GM10248 (cell line): ENCODE measurements at regions of chr11 and their contacts with region 1.

Region 1: DNA sequence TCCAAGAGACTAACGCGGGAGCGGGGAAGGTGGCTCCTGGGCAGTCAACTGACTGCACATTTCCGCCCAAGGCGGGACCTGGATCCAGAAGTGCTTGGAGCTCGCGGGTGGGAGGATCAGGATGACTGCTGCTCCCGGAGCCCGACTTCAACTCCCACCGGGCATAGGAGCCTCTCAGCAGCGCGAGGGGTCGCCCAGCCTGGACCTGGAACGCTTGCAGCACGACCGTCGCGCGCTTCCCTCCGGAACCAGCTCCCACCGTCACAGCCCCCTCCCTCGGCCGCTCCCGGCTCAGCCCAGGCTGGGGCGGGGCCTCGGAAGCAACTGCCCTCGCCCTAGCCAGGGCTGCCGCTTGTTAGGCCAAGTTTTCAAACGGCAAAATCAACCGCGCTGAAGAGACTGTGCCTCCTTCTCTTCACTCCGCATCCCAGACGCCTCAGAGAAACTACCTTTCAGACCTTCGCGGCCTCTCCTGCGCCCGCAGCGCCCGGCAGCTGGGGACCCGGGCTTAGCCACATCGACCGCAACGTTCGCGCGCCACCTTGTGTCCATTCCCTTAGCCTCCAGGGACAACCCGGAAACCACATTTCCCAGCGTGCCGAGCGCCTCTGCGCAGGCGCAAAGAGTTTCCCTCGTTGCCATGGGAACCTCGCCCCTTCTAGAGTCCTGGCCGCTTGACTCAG is 14.0 kb downstream of the SSH3 start:
- DNase-seq: peak; percentile 100
- CTCF ChIP-seq: peak; percentile 91

Region 2: GRCh38 chr11:67082035-67082791 is 235.1 kb before region 1 on chr11:
- CTCF ChIA-PET with region 1: interaction called, 23 read pairs
- POLR2A ChIA-PET with region 1: no interaction called
- DNase-seq: no peak
- CTCF ChIP-seq: no peak

Region 3: GRCh38 chr11:67277231-67277961 is 40.0 kb before region 1 on chr11:
- CTCF ChIA-PET with region 1: interaction called, 21 read pairs
- POLR2A ChIA-PET with region 1: interaction called, 4 read pairs
- DNase-seq: peak; percentile 93
- CTCF ChIP-seq: no peak

Region 4: GRCh38 chr11:67301313-67301921 is 15.9 kb before region 1 on chr11:
- CTCF ChIA-PET with region 1: interaction called, 20 read pairs
- POLR2A ChIA-PET with region 1: interaction called, 3 read pairs
- DNase-seq: no peak
- CTCF ChIP-seq: no peak

Region 5: DNA sequence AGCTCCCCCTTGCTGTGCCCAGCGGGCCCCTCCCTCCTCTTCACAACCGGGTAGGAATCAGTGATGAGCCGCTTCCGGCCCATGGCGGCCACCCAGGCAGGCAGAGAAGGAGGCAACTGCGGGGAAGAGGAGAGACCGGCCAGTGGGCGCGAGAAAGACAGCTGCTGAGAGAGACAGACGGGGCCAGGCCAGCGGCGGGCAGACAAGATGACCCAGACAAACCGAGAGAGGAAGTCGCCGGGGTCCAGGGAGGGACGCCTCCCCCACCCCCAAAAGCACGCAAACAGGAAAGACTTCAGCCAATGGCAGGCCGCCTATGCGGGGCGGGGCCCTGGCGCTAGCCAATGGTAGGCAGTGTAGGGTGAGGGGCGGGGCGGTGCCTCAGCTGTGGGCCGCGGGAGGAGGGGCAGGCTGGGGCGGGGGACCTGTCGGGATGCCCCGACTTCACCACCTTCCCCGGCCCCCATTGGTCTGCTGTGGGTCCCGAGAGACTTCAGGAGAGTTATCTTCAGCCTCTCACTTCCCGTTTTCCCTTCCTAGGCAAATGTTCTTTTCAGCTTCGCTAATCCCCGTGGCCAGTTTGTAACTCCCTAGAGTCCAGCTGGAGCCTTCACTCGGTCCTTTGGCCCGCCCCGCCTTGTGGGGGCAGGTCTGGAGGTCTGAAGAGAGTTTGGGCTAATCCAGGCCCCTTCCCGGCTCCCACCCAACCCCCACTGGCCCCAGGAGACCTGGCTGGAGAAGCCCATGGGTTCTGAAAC is 36.1 kb after region 1 on chr11 and contains the start of gene POLD4:
- CTCF ChIA-PET with region 1: interaction called, 127 read pairs
- POLR2A ChIA-PET with region 1: no interaction called
- DNase-seq: peak; percentile 98
- CTCF ChIP-seq: no peak